Pancreas (tissue), 10 donors: ENCODE measurements at regions of chr20 and their contacts with region 1.

Region 1: GRCh38 chr20:54199721-54200176 is 8.1 kb upstream of the PFDN4 start:
- DNase-seq: peak; percentile 54 to 89 (median 77)
- ATAC-seq: peak; percentile 78 to 97 (median 94)
- H3K4me3 ChIP-seq: no peak overlapping the region
- H3K27ac ChIP-seq: no peak overlapping the region
- H3K4me1 ChIP-seq: no peaks in the 10 kb centered on the region
- H3K27me3 ChIP-seq: no peaks in the 10 kb centered on the region
- CTCF ChIP-seq: peak; percentile 59 to 92 (median 88)

Region 2: GRCh38 chr20:53643031-53643832 is 556.5 kb before region 1 on chr20:
- intact Hi-C with region 1: no loop called
- DNase-seq: peak in 3 of 6 donors; percentile 44 to 62 (median 47)
- ATAC-seq: peak; percentile 65 to 89 (median 80)
- H3K4me3 ChIP-seq: peak overlapping the region in 1 of 4 donors; percentile 2
- H3K27ac ChIP-seq: peak overlapping the region; percentile 76 to 95 (median 90)
- H3K4me1 ChIP-seq: peaks cover 14 to 20% (median 19%) of the 10 kb centered on the region in 3 donors
- H3K27me3 ChIP-seq: no peaks in the 10 kb centered on the region
- CTCF ChIP-seq: no peak

Region 3: GRCh38 chr20:54097236-54097529 is 102.6 kb before region 1 on chr20:
- intact Hi-C with region 1: loop called (anchors 5 to 10 kb)
- DNase-seq: no peak
- ATAC-seq: no peak
- H3K4me3 ChIP-seq: no peak overlapping the region
- H3K27ac ChIP-seq: no peak overlapping the region
- H3K4me1 ChIP-seq: no peaks in the 10 kb centered on the region
- H3K27me3 ChIP-seq: no peaks in the 10 kb centered on the region
- CTCF ChIP-seq: no peak

Region 4: GRCh38 chr20:54103067-54103761 is 96.5 kb before region 1 on chr20:
- intact Hi-C with region 1: loop called (anchors 5 to 10 kb)
- DNase-seq: peak; percentile 62 to 96 (median 82)
- ATAC-seq: peak; percentile 85 to 97 (median 90)
- H3K4me3 ChIP-seq: no peak overlapping the region
- H3K27ac ChIP-seq: no peak overlapping the region
- H3K4me1 ChIP-seq: peaks cover 0 to 8% (median 0%) of the 10 kb centered on the region in 3 donors
- H3K27me3 ChIP-seq: no peaks in the 10 kb centered on the region
- CTCF ChIP-seq: peak; percentile 84 to 88 (median 86)

Region 5: GRCh38 chr20:54148947-54149503 is 50.7 kb before region 1 on chr20:
- intact Hi-C with region 1: no loop called
- DNase-seq: peak in 1 of 6 donors; percentile 36
- ATAC-seq: peak; percentile 31 to 77 (median 48)
- H3K4me3 ChIP-seq: no peak overlapping the region
- H3K27ac ChIP-seq: no peak overlapping the region
- H3K4me1 ChIP-seq: no peaks in the 10 kb centered on the region
- H3K27me3 ChIP-seq: no peaks in the 10 kb centered on the region
- CTCF ChIP-seq: no peak

Region 6: DNA sequence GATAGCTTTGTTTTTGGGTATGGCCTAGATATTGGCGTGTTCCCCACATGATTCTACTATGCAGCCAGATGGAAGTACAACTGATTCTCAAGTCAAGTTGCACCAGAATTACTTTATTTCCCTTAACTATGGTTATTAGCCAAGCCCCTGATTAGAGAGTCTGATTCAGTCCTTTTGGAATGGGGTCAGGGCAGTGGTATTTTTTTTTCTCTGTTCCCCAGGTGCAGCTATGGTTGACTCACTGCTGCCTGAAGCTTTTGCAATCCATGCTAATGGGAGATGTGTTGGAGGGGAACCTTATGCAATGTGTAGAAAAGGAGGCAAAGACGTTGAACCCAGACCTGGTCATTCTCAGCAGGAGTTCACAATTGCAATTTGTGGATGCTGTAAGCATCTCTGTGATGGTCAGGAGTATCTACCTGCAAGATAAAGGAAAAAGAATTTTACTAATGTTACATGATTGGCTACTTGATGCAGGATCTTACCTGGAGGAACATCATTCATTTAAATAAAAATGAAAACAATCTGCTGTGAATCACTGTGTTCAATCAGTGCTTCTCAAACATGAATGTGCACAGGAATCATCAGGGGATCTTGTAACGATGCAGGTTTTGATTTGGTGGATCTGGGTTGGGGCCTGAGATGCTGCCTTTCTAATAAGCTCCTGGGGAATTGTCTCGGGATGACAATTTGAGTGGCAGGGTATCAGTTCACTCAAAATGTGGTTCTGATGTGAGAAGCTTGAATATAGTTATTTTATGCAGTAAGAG is 57.5 kb after region 1 on chr20:
- intact Hi-C with region 1: no loop called
- DNase-seq: no peak
- ATAC-seq: peak in 2 of 4 donors; percentile 53 to 64
- H3K4me3 ChIP-seq: no peak overlapping the region
- H3K27ac ChIP-seq: no peak overlapping the region
- H3K4me1 ChIP-seq: no peaks in the 10 kb centered on the region
- H3K27me3 ChIP-seq: no peaks in the 10 kb centered on the region
- CTCF ChIP-seq: no peak